SK-N-SH (cell line): ENCODE measurements at regions of chr12 and their contacts with region 1.

Region 1: DNA sequence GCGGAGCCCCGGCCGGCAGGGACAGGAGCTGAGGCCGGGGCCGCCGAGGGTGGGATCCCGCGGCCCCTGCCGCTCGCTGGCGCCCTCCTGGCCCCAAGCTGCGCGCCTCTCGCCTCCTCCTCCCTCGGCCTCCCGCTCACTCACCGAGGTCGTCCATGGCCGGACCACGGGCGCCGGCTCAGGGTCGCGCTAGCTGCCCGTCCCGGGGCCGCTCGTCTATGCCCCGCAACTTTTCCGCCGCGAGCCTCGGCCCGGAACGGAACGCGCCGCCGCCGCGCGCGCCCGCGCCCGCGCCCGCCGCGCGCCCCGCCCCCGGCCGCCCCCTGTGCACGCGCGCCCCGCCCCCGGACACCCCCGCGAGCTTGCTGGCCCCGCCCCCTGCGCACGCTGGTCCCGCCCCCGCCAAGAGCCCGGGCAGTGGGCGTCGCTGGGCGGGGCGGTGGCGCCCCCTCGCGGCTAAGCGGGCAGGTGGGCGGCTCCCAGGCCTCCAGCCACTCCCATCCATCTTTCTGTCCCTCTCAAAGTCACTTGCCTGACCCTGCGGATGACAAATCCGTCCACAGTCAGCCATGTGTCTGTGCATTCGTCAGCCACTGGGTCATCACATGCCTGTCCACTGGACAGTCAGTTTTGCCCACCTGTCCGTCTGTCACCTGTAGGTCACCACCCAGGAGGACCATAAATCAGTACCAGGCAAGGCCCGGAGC is at the start of gene PXN:
- DNase-seq: peak; percentile 100
- H3K4me3 ChIP-seq: peak within 1 kb of the TSS; percentile 73 to 83
- H3K27ac ChIP-seq: peak within 1 kb of the TSS; percentile 51 to 57; a peak in 2 of 4 replicates
- H3K4me1 ChIP-seq: peaks cover 22 to 27% of the 10 kb centered on the region in 2 experiments; a peak in 3 of 4 replicates
- H3K27me3 ChIP-seq: no peaks in the 10 kb centered on the region
- CTCF ChIP-seq: peak; percentile 73
- EP300 ChIP-seq: no peak
- RAD21 ChIP-seq: peak; percentile 87
- polyA plus RNA-seq, gene PXN: 63.0 and 89.0 TPM in 2 replicates

Region 2: DNA sequence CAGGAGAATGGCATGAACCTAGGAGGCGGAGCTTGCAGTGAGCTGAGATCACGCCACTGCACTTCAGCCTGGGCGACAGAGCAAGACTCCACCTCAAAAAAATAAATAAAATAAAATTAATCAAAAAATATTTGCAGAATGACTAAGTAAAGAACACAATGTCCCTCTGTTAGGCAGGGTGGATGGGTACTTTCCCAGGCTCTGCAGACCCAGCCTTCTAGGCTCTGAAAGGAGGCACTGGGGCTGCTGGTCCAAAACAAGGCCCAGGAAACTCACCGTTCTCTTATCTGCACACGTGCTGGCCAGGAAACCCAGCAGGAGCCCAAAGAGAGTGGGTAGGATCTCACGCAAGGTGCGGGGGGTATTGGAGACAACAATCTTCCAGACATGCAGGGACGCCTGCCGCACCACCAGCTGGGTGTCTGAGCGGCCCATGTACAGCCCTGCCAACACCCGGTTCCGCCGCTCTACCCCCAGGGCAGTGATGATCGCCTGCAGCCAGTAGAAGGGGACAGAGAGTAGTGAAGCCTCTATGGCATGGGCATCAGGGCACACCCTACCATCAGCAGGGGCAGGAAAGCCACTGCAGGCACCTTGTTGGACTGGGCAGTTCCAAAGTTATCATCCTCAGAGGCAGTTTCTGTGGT is 123.3 kb before region 1 on chr12:
- CTCF ChIA-PET with region 1: no interaction called
- POLR2A ChIA-PET with region 1: no interaction called
- DNase-seq: no peak
- H3K4me3 ChIP-seq: no peak overlapping the region
- H3K27ac ChIP-seq: no peak overlapping the region
- H3K4me1 ChIP-seq: no peaks in the 10 kb centered on the region
- H3K27me3 ChIP-seq: no peaks in the 10 kb centered on the region
- CTCF ChIP-seq: no peak
- EP300 ChIP-seq: no peak
- RAD21 ChIP-seq: no peak

Region 3: DNA sequence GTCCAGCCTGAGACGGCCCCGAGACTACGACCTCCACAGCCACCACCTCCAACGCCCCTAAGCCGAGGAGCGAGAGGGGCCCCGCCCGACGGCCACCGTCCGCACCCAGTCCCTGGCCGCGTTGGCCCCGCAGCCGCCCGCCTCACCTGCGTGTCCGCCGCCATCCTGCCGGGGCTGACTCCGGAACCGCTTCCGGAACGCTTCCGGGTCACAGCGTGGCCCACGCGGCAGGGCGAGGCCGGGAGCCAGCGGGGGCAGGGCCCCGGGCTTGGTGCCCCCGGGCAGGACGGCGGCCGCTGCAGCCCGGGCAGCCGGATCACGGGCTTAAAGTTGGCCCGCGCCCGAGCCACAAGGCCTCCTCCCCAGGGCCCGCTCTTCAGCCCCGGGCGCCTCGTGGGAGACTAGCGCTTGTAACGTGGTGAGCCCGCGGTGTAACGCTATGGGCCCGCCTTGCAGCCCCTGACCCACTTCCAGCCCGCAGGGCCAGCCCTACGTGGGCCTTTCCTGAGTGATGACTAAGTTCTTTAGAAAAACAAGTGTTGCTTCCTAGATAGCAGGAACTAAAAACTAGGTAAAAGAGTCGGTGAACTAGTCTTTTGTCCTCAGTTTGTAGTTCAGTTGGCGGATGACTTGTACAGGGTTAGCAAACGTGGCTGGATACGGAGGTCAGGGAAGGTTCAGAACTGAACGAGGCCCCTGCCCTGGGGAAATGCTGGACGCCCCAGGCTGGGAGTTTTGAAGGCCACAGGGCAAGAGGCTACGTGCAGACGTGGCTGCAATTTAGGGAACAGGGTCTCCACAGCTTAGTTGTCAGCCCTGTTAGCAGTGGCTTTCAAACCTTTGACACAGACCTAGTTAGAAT is 70.9 kb before region 1 on chr12 and contains the start of gene GCN1:
- CTCF ChIA-PET with region 1: interaction called, 33 read pairs
- POLR2A ChIA-PET with region 1: no interaction called
- DNase-seq: peak; percentile 94
- H3K4me3 ChIP-seq: peak within 1 kb of the TSS; percentile 67 to 88
- H3K27ac ChIP-seq: peak within 1 kb of the TSS; percentile 86 to 93
- H3K4me1 ChIP-seq: peaks cover 23 to 35% of the 10 kb centered on the region in 2 experiments
- H3K27me3 ChIP-seq: no peaks in the 10 kb centered on the region
- CTCF ChIP-seq: no peak
- EP300 ChIP-seq: no peak; a peak in 1 of 4 replicates
- RAD21 ChIP-seq: no peak
- polyA plus RNA-seq, gene GCN1: 41.2 and 54.4 TPM in 2 replicates

Region 4: GRCh38 chr12:120234643-120235368 is 30.8 kb before region 1 on chr12:
- CTCF ChIA-PET with region 1: interaction called, 618 read pairs
- POLR2A ChIA-PET with region 1: interaction called, 22 read pairs
- DNase-seq: peak; percentile 67
- H3K4me3 ChIP-seq: no peak overlapping the region
- H3K27ac ChIP-seq: peak overlapping the region; percentile 80 to 100
- H3K4me1 ChIP-seq: peaks cover 41 to 75% of the 10 kb centered on the region in 2 experiments; a peak in 3 of 4 replicates
- H3K27me3 ChIP-seq: no peaks in the 10 kb centered on the region
- CTCF ChIP-seq: peak; percentile 59
- EP300 ChIP-seq: peak in 1 of 2 experiments; percentile 80; a peak in 2 of 4 replicates
- RAD21 ChIP-seq: peak; percentile 44

Region 5: GRCh38 chr12:120249875-120250795 is 15.5 kb before region 1 on chr12:
- CTCF ChIA-PET with region 1: interaction called, 17 read pairs
- POLR2A ChIA-PET with region 1: no interaction called
- DNase-seq: no peak
- H3K4me3 ChIP-seq: no peak overlapping the region
- H3K27ac ChIP-seq: peak overlapping the region in 1 of 2 experiments; percentile 93; a peak in 2 of 4 replicates
- H3K4me1 ChIP-seq: peaks cover 13 to 52% of the 10 kb centered on the region in 2 experiments
- H3K27me3 ChIP-seq: no peaks in the 10 kb centered on the region
- CTCF ChIP-seq: no peak
- EP300 ChIP-seq: no peak
- RAD21 ChIP-seq: no peak

Region 6: DNA sequence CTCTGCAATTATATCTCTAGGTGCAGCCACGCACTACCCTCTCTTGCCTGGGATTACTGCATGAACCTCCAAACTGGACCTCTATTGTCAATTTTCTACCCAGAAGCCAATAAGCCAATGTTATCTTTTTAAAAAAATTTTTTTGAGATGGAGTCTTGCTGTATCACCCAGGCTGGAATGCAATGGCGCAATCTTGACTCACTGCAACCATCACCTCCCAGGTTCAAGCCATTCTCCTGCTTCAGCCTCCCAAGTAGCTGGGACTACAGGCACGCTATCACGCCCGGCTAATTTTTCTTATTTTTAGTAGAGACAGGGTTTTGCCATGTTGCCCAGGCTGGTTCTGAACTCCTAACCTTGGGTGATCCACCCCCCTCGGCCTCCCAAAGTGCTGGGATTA is 11.1 kb after region 1 on chr12:
- CTCF ChIA-PET with region 1: interaction called, 16 read pairs
- POLR2A ChIA-PET with region 1: no interaction called
- DNase-seq: no peak
- H3K4me3 ChIP-seq: no peak overlapping the region
- H3K27ac ChIP-seq: no peak overlapping the region
- H3K4me1 ChIP-seq: no peaks in the 10 kb centered on the region
- H3K27me3 ChIP-seq: no peaks in the 10 kb centered on the region
- CTCF ChIP-seq: no peak
- EP300 ChIP-seq: no peak
- RAD21 ChIP-seq: no peak

Region 7: DNA sequence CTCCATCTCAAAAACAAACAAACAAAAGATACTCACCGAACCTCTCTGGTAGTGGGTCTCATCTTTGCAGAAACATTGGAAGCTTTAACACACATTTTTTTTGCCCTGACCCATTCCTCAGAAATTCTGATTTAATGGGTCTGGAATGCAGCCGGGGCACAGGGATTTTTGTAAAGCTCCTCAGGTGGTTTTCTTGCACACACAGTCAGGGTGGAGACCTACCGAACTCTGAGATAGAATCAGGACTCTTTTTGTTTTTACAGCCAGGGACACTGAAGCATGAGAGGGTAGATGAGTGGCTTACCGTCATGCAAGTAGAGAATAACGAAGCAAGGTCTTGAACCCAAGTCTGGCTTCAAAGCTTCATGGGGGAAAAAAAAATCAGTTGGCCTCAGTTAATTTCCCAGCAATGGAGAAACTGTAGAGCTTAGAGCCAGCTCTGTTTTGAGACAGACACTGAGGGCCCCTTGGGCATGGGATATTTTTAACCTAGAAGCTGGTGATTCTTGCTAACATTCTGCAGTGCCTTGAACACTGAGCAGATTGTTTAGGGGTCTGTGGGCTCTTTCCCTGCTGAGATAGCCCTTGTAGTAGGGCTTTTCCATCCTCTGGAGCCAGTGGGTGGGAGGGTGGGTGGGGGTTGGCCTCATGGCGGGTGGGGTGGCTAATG is 21.3 kb after region 1 on chr12:
- CTCF ChIA-PET with region 1: interaction called, 27 read pairs
- POLR2A ChIA-PET with region 1: interaction called, 38 read pairs
- DNase-seq: no peak
- H3K4me3 ChIP-seq: no peak overlapping the region
- H3K27ac ChIP-seq: no peak overlapping the region
- H3K4me1 ChIP-seq: peaks cover 0 to 2% of the 10 kb centered on the region in 2 experiments; a peak in 1 of 4 replicates
- H3K27me3 ChIP-seq: no peaks in the 10 kb centered on the region
- CTCF ChIP-seq: no peak
- EP300 ChIP-seq: no peak
- RAD21 ChIP-seq: no peak